ENCODE measurements at regions of chr5 and their contacts with region 1.

Region 1: DNA sequence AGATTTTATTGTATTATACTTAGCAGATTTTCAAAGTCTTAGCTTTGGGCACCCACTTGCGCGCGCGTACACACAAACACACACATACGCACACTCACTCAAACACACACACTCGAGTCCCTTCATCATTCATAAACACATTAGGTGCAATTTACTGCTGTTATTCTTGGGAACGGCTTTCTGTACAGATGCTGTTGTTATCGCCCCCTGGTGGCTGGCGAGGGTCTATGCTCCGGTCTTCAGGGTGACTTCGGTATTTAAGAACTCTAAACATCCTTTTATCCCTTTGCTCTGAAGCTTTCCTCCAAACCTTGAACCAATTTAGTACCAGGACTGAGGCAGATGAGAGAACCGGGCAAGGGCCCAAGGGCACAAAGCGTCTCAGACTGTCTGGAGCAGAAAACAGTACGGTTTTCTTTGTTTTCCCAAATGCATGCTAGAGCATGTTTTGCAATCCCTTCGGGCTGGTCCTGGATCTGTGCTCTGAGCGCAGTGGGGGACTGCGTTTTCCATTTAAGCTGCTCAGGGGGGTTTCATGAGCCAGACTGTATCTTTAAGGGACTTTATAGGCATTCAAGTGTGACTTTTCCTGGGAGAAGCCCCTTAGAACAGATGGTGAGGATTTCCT is 1.7 kb upstream of the SLIT3 start:
- DNase-seq: peak; percentile 73
- ATAC-seq: peak; percentile 76
- H3K4me3 ChIP-seq: no peak overlapping the region
- H3K27ac ChIP-seq: no peak overlapping the region
- H3K4me1 ChIP-seq: no peaks in the 10 kb centered on the region
- H3K27me3 ChIP-seq: peaks cover 30% of the 10 kb centered on the region
- CTCF ChIP-seq: peak; percentile 80
- POLR2A ChIP-seq: no peak
- RAD21 ChIP-seq: peak; percentile 63

Region 2: GRCh38 chr5:168706655-168707069 is 595.9 kb before region 1 on chr5:
- CTCF ChIA-PET with region 1: interaction called, 3 read pairs
- POLR2A ChIA-PET with region 1: no interaction called
- dilution Hi-C with region 1: no loop called
- in situ Hi-C with region 1: no loop called
- intact Hi-C with region 1: loop called (anchors 1 kb)
- DNase-seq: peak; percentile 47
- ATAC-seq: peak; percentile 75
- H3K4me3 ChIP-seq: no peak overlapping the region
- H3K27ac ChIP-seq: no peak overlapping the region
- H3K4me1 ChIP-seq: no peaks in the 10 kb centered on the region
- H3K27me3 ChIP-seq: no peaks in the 10 kb centered on the region
- CTCF ChIP-seq: peak; percentile 64
- POLR2A ChIP-seq: no peak
- RAD21 ChIP-seq: peak; percentile 75

Region 3: DNA sequence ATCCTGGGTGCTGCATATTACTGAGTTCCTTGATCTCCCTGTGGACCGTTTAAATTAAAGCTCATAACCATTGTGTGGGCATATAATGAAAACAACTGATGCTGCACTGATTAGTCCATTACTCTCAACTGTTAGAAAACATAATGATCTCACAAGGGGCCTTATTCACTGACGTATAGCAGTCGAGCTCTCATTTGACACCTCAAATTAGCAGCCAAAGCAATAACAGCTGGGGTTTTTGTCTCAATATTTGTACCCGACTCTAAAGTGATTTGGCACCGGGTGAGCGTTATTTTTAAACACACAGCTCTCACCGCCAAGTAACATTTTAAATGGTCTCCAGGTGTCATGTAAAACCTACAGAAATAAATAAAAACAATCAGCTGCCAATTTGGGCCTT is 471.2 kb before region 1 on chr5:
- CTCF ChIA-PET with region 1: no interaction called
- POLR2A ChIA-PET with region 1: no interaction called
- dilution Hi-C with region 1: no loop called
- in situ Hi-C with region 1: no loop called
- intact Hi-C with region 1: no loop called
- DNase-seq: no peak
- ATAC-seq: no peak
- H3K4me3 ChIP-seq: no peak overlapping the region
- H3K27ac ChIP-seq: no peak overlapping the region
- H3K4me1 ChIP-seq: no peaks in the 10 kb centered on the region
- H3K27me3 ChIP-seq: no peaks in the 10 kb centered on the region
- CTCF ChIP-seq: no peak
- POLR2A ChIP-seq: no peak
- RAD21 ChIP-seq: no peak

Region 4: DNA sequence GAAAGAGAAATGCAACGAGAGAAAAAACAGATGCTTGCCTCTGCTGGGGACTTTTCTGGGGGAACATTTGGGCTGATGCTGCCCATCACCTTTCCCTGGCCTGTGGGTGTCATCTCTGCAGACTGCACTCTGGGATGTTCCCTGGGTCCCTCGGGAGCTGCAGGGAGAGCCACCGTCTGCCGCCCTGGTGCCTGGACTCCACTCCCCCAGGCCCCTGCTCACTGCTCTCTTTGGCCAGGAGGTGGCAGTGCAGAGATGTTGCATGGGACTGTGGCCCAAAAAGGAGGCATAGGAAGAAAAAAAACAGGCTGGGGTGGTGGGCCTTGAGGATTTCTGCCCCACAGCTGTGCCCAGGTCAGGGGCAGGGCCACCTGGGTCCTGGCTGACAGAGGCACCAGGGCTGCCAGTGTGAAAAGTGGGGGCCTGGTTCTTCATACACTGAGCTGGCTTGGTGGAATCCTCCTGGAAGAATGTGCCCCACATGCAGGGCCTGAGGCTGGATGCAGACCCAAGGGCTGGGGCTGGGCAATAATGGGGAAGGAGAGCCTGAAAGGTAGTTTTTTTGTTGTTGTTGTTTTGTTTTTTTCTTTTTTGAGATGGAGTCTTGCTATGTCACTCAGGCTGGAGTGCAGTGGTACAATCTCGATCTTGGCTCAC is 355.3 kb before region 1 on chr5:
- CTCF ChIA-PET with region 1: no interaction called
- POLR2A ChIA-PET with region 1: no interaction called
- dilution Hi-C with region 1: no loop called
- in situ Hi-C with region 1: no loop called
- intact Hi-C with region 1: loop called (anchors 1 kb)
- DNase-seq: peak; percentile 13
- ATAC-seq: peak; percentile 87
- H3K4me3 ChIP-seq: no peak overlapping the region
- H3K27ac ChIP-seq: peak overlapping the region; percentile 23; the same call in 1 of the 2 replicates
- H3K4me1 ChIP-seq: no peaks in the 10 kb centered on the region
- H3K27me3 ChIP-seq: no peaks in the 10 kb centered on the region; the same call in 1 of the 2 replicates
- CTCF ChIP-seq: peak; percentile 56
- POLR2A ChIP-seq: no peak
- RAD21 ChIP-seq: peak; percentile 35

Measured in IMR-90 (cell line).